Activated CD4-positive, alpha-beta memory T cell treated with anti-CD3 and anti-CD28 coated beads for 36 hours (primary cell): ENCODE measurements at regions of chr20 and their contacts with region 1.

Region 1: DNA sequence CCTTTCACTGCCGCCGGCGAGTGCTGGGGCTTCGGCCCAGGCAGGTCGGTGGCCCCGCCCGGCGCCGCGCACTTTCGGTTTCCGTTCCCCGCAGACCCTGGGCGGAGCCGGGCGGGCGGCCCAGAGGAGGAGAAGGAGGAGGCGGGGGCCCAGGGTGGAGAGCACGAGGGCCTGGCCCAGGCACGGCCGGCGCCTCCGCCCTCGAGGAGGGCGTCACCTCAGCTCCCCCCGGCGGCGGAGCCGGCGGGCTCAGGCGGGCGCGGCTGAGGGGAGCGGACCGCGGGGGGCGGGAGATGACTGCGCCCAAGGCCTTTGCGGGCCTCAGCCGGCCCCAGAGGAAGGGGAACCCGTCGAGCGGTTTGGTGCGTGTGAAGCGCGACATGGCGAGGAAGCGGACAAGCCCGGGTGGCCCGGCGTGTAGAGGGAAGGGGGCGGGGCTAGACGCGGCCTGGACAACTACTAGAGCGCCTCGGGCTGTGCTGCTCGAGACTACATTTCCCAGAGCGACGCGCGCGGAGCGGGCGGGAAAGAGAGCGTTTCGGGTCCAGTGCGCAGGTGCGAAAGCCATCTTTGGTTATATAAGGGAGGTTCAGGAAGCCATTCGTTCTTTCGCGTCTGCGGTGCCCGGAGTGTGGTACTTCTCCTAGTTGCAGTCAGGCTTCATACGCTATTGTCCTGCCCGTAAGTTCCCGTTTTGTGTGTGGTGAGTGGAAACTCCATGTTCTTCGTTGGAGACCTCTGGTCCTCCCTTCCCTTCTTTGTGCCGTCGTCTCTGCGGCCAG is at the start of gene ZNFX1:
- DNase-seq: peak; percentile 99
- H3K4me3 Mint-ChIP-seq: peak within 1 kb of the TSS; percentile 99
- H3K27ac Mint-ChIP-seq: peak within 1 kb of the TSS; percentile 99
- H3K4me1 Mint-ChIP-seq: peaks cover 51% of the 10 kb centered on the region
- H3K27me3 Mint-ChIP-seq: peaks cover 2% of the 10 kb centered on the region
- total RNA-seq, gene ZNFX1: 42.5 to 45.3 TPM

Region 2: GRCh38 chr20:49046087-49046900 is 231.9 kb before region 1 on chr20 and contains the start of gene CSE1L:
- CTCF ChIA-PET with region 1: interaction called, 3 read pairs
- POLR2A ChIA-PET with region 1: interaction called, 9 read pairs
- intact Hi-C with region 1: loop called (anchors 1 kb)
- DNase-seq: peak; percentile 96
- H3K4me3 Mint-ChIP-seq: peak within 1 kb of the TSS; percentile 99
- H3K27ac Mint-ChIP-seq: peak within 1 kb of the TSS; percentile 99
- H3K4me1 Mint-ChIP-seq: peaks cover 33% of the 10 kb centered on the region
- H3K27me3 Mint-ChIP-seq: no peaks in the 10 kb centered on the region
- total RNA-seq, gene CSE1L: 107 to 109 TPM

Region 3: GRCh38 chr20:49245921-49246740 is 32.1 kb before region 1 on chr20:
- CTCF ChIA-PET with region 1: interaction called, 11 read pairs
- POLR2A ChIA-PET with region 1: interaction called, 3 read pairs
- intact Hi-C with region 1: no loop called
- DNase-seq: peak; percentile 25
- H3K4me3 Mint-ChIP-seq: no peak overlapping the region
- H3K27ac Mint-ChIP-seq: peak overlapping the region; percentile 30
- H3K4me1 Mint-ChIP-seq: peaks cover 2% of the 10 kb centered on the region
- H3K27me3 Mint-ChIP-seq: no peaks in the 10 kb centered on the region

Region 4: DNA sequence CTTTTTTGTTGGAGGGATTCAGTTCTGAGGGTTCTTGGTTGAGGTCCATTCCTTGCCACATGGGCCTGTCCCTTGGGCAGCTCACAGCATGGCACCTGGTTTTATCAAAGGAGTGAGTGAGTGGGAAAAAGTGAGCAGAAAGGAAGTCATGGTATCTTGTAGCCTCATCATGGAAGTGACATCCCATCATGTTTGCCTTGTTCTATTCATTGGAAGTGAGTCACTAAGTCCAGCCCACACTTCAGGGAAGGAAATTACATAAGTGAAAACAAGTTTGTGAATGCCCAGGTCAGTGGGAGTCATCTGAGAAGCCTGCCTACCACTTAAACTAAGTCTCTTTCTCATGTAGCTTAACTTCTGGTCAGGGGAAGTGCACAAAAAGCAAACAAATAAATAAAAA is 32.5 kb after region 1 on chr20:
- CTCF ChIA-PET with region 1: no interaction called
- POLR2A ChIA-PET with region 1: interaction called, 4 read pairs
- intact Hi-C with region 1: loop called (anchors 1 kb)
- DNase-seq: peak; percentile 34
- H3K4me3 Mint-ChIP-seq: no peak overlapping the region
- H3K27ac Mint-ChIP-seq: peak overlapping the region; percentile 71
- H3K4me1 Mint-ChIP-seq: peaks cover 28% of the 10 kb centered on the region
- H3K27me3 Mint-ChIP-seq: no peaks in the 10 kb centered on the region